Activated CD4-positive, alpha-beta memory T cell treated with anti-CD3 and anti-CD28 coated beads, Interleukin-2, amount 10 ng/mL, durations not matched to agents 7 days and 5 days (primary cell): ENCODE measurements at regions of chr11 and their contacts with region 1.

Region 1: DNA sequence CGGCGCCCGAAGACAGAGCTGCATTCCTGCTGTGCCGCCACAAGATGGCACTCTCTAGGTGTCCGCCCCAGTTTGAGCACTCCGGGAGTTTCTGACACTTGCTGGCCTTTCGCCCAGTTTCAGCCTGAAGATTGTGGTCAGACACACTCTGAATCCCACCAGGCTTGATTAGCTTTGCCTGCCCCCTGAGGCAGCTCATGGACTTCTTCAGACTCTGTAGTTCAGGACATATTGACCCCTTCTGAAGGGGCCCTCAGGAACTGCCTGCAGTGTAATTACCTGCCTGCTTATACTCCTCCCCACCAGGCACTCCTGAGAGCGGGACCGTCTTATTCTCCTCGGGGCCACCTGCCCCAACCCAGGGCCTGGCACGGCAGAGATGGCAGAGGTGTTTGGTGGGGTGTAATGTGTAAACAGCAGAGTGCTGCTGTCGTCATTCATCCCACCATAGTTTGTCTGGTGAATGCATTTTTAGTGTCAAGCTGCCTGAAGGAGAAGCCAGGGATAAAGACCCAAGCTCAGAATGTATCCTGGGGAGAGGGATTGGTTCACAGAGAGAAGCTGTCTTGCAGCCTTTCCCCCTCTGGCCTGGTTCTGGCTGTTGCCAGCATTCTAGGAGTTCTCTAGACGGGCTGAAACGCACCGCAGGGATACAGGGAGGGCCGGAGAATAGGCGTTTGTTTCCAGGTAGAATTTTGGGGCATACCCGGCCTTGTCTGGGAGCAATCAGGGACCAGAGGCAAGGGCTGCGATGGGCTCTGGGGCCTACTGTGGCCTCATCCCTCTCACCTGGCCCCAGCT is 46.4 kb downstream of the EIF3F start:
- DNase-seq: peak; percentile 45
- H3K4me3 Mint-ChIP-seq: no peak overlapping the region
- H3K27ac Mint-ChIP-seq: no peak overlapping the region
- H3K4me1 Mint-ChIP-seq: no peaks in the 10 kb centered on the region
- H3K27me3 Mint-ChIP-seq: peaks cover 7% of the 10 kb centered on the region

Region 2: DNA sequence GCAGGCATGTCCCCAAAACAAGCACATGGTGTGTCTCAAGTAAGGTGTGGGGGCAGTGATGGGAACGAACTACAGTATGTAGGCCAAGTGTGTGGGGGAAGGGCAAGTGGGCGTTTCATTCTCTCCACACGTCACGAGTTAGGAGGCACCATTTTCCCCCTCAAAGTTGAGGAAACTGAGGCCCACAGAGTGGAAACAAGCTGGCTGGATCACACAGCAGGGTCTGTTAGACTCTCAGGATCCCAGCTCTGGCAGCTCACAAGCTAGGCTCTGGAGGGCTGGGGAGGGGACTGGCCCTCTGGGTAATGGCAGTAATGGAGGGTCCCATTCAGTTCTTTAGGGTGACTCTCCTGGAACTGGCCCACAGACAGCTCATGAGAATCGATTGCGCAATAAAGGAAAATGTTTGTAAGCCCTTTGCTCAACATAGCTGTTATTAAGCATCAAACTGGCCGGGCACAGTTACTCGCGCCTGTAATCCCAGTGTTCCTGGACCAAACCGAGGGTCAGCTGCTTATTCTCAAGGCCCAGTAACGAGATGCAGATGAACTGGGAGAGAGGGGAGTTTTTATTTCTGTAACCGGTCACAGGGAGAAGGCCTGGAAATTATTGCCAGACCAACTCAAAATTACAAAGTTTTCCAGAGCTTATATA is 23.4 kb after region 1 on chr11:
- CTCF ChIA-PET with region 1: interaction called, 16 read pairs
- POLR2A ChIA-PET with region 1: no interaction called
- DNase-seq: no peak
- H3K4me3 Mint-ChIP-seq: no peak overlapping the region
- H3K27ac Mint-ChIP-seq: no peak overlapping the region
- H3K4me1 Mint-ChIP-seq: peaks cover 3% of the 10 kb centered on the region
- H3K27me3 Mint-ChIP-seq: no peaks in the 10 kb centered on the region

Region 3: DNA sequence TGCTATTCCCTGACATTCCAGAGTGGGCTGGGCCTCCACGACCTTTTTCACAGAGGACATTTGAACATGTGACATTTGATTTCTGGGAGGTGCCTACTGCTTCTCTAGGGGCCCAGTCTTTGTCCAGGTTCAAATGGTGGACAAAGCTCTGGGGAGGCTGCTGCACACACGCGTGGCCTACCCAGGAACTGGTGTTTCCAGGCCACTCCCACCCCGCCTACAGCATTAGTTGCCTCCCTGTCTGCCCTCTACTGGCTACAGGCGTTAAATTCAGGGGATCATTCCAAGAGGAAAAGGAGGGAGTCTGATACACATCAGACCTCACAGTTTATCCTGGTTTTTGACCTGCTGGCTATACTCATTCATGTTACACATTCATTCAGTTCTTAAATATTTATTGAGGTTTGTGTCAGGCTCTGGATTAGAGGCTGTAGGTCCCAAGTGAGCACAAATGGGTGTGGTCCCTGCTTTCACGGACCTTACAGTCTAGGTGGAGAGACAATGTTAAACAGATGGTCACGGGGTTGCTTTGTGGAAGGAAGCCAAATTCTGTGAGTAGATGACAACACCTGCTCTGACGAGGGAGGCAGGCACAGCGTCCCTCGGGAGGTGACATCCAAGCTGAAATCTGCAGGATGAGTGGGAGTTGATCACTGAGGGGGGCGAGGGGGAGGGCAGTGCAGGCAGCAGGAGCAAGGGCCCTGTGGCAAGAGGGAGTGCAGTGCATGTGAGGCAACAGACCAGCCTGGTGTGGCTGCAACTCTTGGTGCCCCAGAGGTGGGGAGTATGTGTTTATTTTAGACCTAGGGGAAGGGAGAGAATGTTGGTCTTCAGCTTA is 59.3 kb after region 1 on chr11:
- CTCF ChIA-PET with region 1: interaction called, 118 read pairs
- POLR2A ChIA-PET with region 1: no interaction called
- DNase-seq: peak; percentile 48
- H3K4me3 Mint-ChIP-seq: no peak overlapping the region
- H3K27ac Mint-ChIP-seq: no peak overlapping the region
- H3K4me1 Mint-ChIP-seq: no peaks in the 10 kb centered on the region
- H3K27me3 Mint-ChIP-seq: no peaks in the 10 kb centered on the region

Region 4: DNA sequence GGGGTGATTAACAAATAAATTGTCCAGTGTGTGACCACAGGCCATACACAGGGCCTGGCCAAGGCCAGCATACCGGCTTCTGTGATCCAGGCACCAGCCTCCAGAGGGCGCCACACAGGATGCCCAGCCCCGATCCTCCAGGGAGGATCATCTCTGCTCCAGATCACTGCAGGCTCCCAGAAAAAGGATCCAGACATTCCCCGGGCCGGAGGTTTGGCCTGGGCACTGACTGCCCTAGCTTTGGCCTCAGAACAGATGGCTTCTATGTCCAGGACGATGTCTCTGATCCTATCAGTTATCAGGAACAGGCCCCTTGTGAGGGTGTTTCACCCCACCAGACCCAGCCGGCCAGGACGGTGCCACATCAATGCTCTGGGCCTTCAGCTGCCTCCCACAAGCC is 304.6 kb after region 1 on chr11:
- CTCF ChIA-PET with region 1: no interaction called
- POLR2A ChIA-PET with region 1: no interaction called
- DNase-seq: peak; percentile 36
- H3K4me3 Mint-ChIP-seq: no peak overlapping the region
- H3K27ac Mint-ChIP-seq: no peak overlapping the region
- H3K4me1 Mint-ChIP-seq: no peaks in the 10 kb centered on the region
- H3K27me3 Mint-ChIP-seq: peaks cover 2% of the 10 kb centered on the region